Heart right ventricle (tissue), 16 donors: ENCODE measurements at regions of chr6 and their contacts with region 1.

Region 1: DNA sequence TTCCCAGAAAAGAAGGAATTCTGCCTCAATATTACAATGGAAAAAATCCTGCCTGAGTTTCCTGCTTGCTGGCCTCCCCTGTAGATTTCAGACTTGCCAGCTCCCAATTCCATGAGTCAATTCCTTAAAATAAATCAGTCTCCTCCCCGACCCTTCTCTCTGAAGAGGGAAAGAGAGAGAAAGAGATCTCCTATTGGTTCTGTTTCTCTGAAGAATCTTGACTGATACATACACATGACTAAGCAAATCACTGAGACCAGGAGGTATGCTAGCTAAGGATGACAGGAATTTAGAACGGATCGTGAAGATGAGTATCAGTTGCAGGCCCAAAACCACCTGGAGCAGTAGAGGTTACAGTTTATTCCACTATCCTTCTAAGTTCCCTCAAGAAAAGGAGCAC is 11.3 kb upstream of the RBM24 start:
- DNase-seq: no peak
- ATAC-seq: peak in 7 of 8 donors; percentile 48 to 85 (median 76)
- H3K4me3 ChIP-seq: no peak overlapping the region
- H3K27ac ChIP-seq: peak overlapping the region in 8 of 10 donors; percentile 36 to 84 (median 60)
- H3K4me1 ChIP-seq: peaks cover 0 to 23% (median 5%) of the 10 kb centered on the region in 9 donors
- H3K27me3 ChIP-seq: no peaks in the 10 kb centered on the region
- CTCF ChIP-seq: no peak

Region 2: GRCh38 chr6:17226786-17227233 is 43.0 kb before region 1 on chr6:
- intact Hi-C with region 1: loop called in 1 of 10 experiments (anchors 5 kb)
- DNase-seq: no peak
- ATAC-seq: no peak
- H3K4me3 ChIP-seq: no peak overlapping the region
- H3K27ac ChIP-seq: no peak overlapping the region
- H3K4me1 ChIP-seq: peaks cover 0 to 28% (median 15%) of the 10 kb centered on the region in 9 donors
- H3K27me3 ChIP-seq: no peaks in the 10 kb centered on the region
- CTCF ChIP-seq: no peak